Esophagus squamous epithelium (tissue), 5 donors: ENCODE measurements at regions of chr13 and their contacts with region 1.

Region 1: GRCh38 chr13:51452361-51453206 is at the start of gene INTS6:
- DNase-seq: peak; percentile 99
- H3K4me3 ChIP-seq: peak within 1 kb of the TSS; percentile 83 to 99 (median 90)
- H3K27ac ChIP-seq: peak within 1 kb of the TSS; percentile 98 to 100 (median 98)
- H3K4me1 ChIP-seq: peaks cover 7 to 45% (median 16%) of the 10 kb centered on the region in 3 donors
- H3K27me3 ChIP-seq: no peaks in the 10 kb centered on the region
- CTCF ChIP-seq: no peak
- POLR2A ChIP-seq: peak; percentile 24 to 99 (median 99)
- total RNA-seq, gene INTS6: 25.1 to 42.2 (median 31.8) TPM

Region 2: DNA sequence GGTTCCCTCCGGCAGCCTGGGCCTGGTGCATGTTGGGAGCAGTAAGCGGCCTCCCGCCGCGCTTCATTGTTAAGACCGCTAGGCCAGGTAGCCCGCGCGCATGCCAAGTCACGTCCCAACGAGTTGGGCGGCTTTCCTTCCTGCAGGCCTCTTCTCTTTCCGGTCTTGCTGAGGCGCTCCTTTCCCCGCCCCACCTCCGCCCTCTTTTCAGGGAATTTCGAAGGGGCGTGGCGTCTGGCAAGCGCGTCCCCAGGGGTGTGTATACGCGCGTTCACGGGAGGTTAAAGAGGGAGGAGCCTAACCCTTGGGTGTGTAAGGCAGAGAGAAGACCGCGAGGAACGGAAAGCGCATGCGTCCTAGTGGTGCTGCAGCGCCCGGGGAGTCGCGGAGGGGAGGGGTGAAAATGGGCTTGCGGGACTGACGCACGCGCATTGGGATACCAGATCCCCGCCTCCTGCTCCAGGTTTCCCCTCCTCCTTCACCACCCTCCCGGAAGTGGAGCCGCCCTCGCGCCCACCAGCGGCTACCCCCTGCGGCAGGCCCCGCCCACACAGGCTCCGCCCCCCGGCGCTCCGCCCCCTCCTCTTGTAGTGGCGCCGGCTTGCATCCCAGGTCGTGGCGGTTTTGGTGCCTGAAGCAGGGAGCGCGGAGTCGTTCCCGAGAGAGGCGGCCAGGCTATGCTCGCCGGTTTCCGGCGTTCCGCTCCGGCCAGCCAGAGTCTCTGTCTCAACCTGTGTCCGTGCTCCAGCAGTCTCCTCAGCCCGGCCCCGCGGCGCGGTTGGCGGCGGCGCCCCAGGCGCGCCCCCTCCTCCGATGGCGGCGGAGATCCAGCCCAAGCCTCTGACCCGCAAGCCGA is 131.5 kb after region 1 on chr13 and contains the start of gene WDFY2:
- intact Hi-C with region 1: loop called (anchors 2 kb)
- DNase-seq: peak; percentile 100
- H3K4me3 ChIP-seq: peak within 1 kb of the TSS; percentile 66 to 95 (median 82)
- H3K27ac ChIP-seq: peak within 1 kb of the TSS; percentile 94 to 98 (median 96)
- H3K4me1 ChIP-seq: peaks cover 14 to 49% (median 19%) of the 10 kb centered on the region in 3 donors
- H3K27me3 ChIP-seq: no peaks in the 10 kb centered on the region
- CTCF ChIP-seq: peak in 4 of 6 experiments; percentile 5 to 39 (median 24)
- POLR2A ChIP-seq: peak in 3 of 4 donors; percentile 77 to 92 (median 91)
- total RNA-seq, gene WDFY2: 7.7 to 23.3 (median 18.2) TPM

Region 3: DNA sequence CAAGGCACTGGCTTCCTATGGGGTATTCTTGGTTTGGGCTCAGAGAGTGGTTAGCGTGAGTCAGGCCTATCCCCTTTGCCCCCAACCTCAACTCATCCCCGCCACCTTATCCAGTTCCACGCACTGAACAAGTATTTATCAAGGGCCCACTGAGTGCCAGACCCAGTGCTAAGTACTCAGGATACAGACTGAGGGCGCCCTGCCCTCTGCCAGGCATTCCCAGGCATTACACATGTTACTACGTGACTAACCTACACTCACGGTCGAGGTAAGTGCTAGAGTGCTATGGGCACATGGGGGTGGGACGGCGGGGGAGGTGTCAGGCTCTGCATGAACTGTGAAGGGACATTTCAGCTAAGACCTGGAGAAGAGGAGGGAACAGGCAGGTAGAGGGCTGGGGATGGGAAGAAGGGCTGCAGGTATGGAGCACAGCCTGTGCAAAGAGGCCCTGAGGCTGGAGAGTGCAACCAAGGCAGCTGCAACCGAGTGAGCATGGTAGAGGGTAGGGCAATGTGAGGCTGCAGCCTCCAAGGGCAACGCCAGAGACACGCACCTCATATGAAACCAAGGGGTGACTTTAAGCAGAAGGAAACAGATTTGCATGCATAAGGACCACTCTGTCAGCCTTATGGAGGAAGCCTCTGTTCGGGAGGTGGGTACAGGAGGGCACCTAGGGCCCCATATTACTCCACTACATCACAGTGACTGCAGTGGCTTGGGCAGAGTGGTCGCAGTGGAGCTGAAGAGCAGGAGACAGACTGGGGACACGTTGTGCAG is 328.9 kb after region 1 on chr13:
- intact Hi-C with region 1: loop called (anchors 10 kb)
- DNase-seq: no peak
- H3K4me3 ChIP-seq: no peak overlapping the region
- H3K27ac ChIP-seq: no peak overlapping the region
- H3K4me1 ChIP-seq: peaks cover 0 to 11% (median 2%) of the 10 kb centered on the region in 3 donors
- H3K27me3 ChIP-seq: no peaks in the 10 kb centered on the region
- CTCF ChIP-seq: peak in 4 of 6 experiments; percentile 27 to 63 (median 42)
- POLR2A ChIP-seq: no peak